ENCODE measurements at regions of chr5 and their contacts with region 1.

Region 1: GRCh38 chr5:43105369-43106289 is 15.1 kb upstream of the ZNF131 start:
- DNase-seq: peak; percentile 96

Region 2: DNA sequence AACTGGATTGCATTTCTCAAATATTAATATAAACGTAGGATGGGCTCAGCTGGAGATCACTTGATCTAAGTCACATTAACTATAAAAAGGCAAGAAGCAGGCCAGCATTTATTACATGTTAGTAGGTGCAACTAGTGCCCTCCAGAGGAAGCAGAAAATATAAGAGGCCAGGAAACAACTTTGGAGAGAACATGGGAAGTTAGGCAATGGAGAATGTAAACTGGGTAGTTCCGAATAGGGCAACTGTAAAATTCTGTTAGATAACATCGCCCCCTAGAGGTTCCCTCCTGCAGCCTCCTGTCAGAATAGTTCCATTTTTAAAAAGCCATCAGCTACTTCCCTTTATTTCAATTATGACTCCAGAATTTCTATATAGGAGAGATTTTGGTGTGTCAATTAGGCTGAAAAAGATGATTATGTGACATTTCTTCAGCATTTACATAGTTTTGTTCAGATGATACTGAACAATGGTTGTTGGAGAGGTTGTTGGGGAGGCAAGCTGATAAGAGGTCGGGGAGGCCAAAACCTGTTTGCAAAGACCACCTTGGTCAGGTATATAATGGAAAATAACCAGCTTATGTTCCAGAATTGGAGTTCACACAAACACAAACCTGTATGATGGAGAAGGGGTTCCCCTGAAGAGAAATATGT is 284.2 kb after region 1 on chr5:
- intact Hi-C with region 1: loop called in 1 of 2 experiments (anchors 10 kb)
- DNase-seq: no peak

Region 3: DNA sequence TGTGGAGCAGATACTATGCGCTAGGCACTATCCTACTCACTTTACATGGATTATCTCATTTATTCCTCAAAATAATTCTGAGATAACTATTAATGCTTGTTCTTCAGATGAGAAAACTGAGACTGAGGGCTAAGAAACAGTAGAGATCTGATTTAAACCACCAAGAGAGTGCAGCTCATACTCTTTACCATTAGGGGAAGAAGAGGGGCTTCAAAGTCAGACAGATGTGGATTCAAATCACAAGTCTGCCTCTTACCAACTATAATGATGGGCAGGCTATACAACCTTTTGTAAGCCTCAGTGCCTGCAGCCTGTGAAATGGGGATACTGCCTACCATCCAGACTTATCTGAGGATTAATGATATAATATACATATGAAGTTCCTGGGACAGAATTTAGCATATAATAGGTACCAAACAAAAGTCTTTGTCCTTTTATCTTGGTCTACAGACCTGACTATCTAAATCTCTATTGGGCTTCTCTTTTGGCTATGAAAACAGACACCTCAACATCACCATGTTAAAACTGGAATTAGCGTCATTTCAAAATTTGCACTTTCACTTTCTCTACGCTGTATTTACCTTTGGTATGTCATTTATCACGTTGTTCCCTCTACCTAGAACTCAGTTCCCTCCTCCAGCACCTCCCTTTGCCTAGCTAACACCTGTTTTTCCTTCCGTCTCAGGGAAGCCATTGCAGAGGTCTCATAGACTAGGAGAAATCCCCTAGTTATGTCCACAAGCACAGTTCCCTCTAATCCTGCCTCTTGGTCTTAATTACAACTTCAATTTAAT is 391.9 kb after region 1 on chr5:
- intact Hi-C with region 1: no loop called
- DNase-seq: no peak